Heart right ventricle (tissue), 16 donors: ENCODE measurements at regions of chr11 and their contacts with region 1.

Region 1: GRCh38 chr11:59641156-59641555 is 25.6 kb upstream of the OSBP start:
- DNase-seq: no peak
- ATAC-seq: no peak
- H3K4me3 ChIP-seq: no peak overlapping the region
- H3K27ac ChIP-seq: no peak overlapping the region
- H3K4me1 ChIP-seq: no peaks in the 10 kb centered on the region
- H3K27me3 ChIP-seq: no peaks in the 10 kb centered on the region
- CTCF ChIP-seq: no peak

Region 2: GRCh38 chr11:59582006-59582405 is 59.1 kb before region 1 on chr11:
- intact Hi-C with region 1: loop called in 1 of 10 experiments (anchors 5 kb)
- DNase-seq: no peak
- ATAC-seq: no peak
- H3K4me3 ChIP-seq: no peak overlapping the region
- H3K27ac ChIP-seq: no peak overlapping the region
- H3K4me1 ChIP-seq: no peaks in the 10 kb centered on the region
- H3K27me3 ChIP-seq: no peaks in the 10 kb centered on the region
- CTCF ChIP-seq: no peak